CD8-positive, alpha-beta T cell (primary cell): ENCODE measurements at regions of chr1 and their contacts with region 1.

Region 1: DNA sequence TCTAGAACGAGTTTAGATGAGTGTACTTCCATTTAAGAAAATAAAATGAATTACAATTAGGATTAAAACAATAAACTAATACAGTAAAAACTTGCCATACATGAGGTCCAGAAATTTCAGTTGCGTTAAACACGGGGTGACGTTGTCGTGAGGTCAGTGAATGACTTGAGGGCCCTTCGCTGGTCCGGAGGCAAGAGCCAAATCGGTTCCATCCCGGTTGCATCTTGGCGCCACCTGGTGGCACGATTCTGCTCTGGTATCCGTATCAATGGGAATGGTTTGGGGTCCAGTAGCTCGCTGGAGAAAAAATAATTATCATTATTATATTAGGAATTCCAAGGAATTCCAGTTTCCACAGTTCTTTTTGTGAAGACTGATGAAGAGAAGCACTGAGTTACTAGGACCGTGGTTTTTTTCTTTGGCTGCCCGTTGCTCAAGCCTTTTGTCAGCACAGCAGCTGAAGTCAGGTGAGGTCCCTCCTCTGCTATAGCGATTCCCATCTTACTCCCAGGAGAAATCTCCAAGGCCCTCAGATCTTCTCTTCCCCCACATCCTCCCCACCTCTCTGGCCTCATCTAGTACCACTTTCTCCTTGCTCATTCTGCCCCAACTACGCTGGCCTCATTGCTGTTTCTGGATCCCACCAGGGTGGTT is 161.4 kb downstream of the SLC35F3 start:
- DNase-seq: peak; percentile 21 to 73 (median 63)
- ATAC-seq: no peak
- H3K4me3 ChIP-seq: no peak overlapping the region
- H3K4me3 Mint-ChIP-seq: no peak overlapping the region
- H3K27ac ChIP-seq: no peak overlapping the region
- H3K27ac Mint-ChIP-seq: no peak overlapping the region
- H3K4me1 ChIP-seq: no peaks in the 10 kb centered on the region
- H3K4me1 Mint-ChIP-seq: peaks cover 2% of the 10 kb centered on the region
- H3K27me3 ChIP-seq: peaks cover 0 to 2% of the 10 kb centered on the region in 2 experiments
- H3K27me3 Mint-ChIP-seq: peaks cover 9% of the 10 kb centered on the region
- CTCF ChIP-seq: peak; percentile 69

Region 2: GRCh38 chr1:233394860-233395717 is 670.8 kb before region 1 on chr1:
- CTCF ChIA-PET with region 1: no interaction called
- POLR2A ChIA-PET with region 1: no interaction called
- intact Hi-C with region 1: loop called in 1 of 2 experiments (anchors 2 kb)
- DNase-seq: peak in 2 of 9 experiments; percentile 29 to 47
- ATAC-seq: no peak
- H3K4me3 ChIP-seq: no peak overlapping the region
- H3K4me3 Mint-ChIP-seq: no peak overlapping the region
- H3K27ac ChIP-seq: no peak overlapping the region
- H3K27ac Mint-ChIP-seq: no peak overlapping the region
- H3K4me1 ChIP-seq: no peaks in the 10 kb centered on the region
- H3K4me1 Mint-ChIP-seq: no peaks in the 10 kb centered on the region
- H3K27me3 ChIP-seq: peaks cover 3 to 4% of the 10 kb centered on the region in 2 experiments
- H3K27me3 Mint-ChIP-seq: peaks cover 48% of the 10 kb centered on the region
- CTCF ChIP-seq: peak; percentile 56